CD8-positive, alpha-beta T cell (primary cell): ENCODE measurements at regions of chr5 and their contacts with region 1.

Region 1: DNA sequence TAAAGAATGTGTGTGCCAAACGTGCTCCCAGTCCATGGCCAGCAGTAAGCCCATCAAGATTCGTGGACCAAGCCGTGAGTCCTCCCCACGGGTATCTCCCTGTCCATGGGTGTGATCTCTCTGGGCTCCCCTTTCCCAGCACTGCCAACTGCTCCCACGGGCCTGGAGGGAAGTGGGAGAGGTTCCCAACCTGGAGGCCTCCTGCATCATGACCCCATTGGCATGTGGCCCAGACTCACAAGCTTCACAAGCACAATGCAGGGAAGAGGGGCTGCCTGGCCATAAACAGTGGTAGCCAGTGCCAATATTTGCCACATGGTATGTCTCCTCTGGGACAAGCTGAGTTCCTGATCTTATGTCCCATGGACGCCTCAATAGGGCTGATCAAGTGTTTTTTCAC is 59.1 kb downstream of the ABLIM3 start:
- DNase-seq: no peak
- ATAC-seq: no peak
- H3K4me3 ChIP-seq: no peak overlapping the region
- H3K4me3 Mint-ChIP-seq: no peak overlapping the region
- H3K27ac ChIP-seq: no peak overlapping the region
- H3K27ac Mint-ChIP-seq: no peak overlapping the region
- H3K4me1 ChIP-seq: no peaks in the 10 kb centered on the region
- H3K4me1 Mint-ChIP-seq: no peaks in the 10 kb centered on the region
- H3K27me3 ChIP-seq: peaks cover 0 to 5% of the 10 kb centered on the region in 2 experiments
- H3K27me3 Mint-ChIP-seq: no peaks in the 10 kb centered on the region
- CTCF ChIP-seq: no peak

Region 2: DNA sequence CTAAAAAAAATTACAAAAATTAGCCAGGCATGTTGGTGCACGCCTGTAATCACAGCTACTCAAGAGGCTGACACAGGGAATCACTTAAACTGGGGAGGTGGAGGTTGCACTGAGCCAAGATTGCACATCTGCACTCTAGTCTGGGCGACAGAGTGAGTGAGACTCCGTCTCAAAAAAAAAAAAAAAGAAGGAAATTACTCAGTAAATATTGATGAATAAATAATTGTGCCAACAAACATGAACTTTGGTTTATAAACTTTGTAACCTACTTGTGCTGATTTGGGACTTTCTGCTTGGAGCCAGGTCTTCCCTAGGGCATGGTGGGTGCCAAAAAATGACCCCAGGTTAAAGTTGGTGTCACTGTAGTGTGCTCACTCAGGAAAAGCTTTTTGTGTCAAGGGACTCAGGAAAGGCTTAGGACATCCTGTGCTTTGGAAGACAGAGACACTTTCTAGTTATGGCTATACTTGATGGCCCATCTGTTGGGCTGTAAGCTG is 40.0 kb before region 1 on chr5:
- CTCF ChIA-PET with region 1: interaction called, 3 read pairs
- POLR2A ChIA-PET with region 1: no interaction called
- intact Hi-C with region 1: loop called in 1 of 2 experiments (anchors 1 kb)
- DNase-seq: no peak
- ATAC-seq: no peak
- H3K4me3 ChIP-seq: no peak overlapping the region
- H3K4me3 Mint-ChIP-seq: no peak overlapping the region
- H3K27ac ChIP-seq: no peak overlapping the region
- H3K27ac Mint-ChIP-seq: no peak overlapping the region
- H3K4me1 ChIP-seq: no peaks in the 10 kb centered on the region
- H3K4me1 Mint-ChIP-seq: no peaks in the 10 kb centered on the region
- H3K27me3 ChIP-seq: no peaks in the 10 kb centered on the region
- H3K27me3 Mint-ChIP-seq: peaks cover 6% of the 10 kb centered on the region
- CTCF ChIP-seq: no peak

Region 3: DNA sequence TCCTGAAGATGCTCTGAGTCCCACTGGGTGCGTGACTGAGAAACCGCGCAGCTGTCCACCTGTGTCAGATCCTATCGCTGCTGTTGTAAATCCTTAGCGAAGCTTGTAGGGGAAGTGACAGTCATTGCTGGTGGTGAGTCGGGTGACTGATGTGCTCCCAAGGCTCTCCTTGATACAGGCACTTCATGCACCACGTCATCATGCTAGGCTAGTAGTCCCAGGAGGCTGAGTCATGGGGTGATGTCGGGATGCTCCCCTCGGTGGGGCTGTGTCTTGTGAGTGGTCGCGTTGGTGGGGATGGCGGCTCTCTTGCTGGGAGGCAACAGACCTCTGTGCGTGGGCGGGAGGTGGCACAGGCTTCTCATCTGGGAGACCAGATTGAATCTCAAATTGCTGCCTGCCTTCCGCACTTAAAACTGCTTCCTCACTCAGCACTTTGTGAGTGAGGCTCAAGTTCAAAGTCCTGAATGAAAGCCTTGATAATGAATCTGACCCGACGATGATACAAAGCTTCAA is 266.2 kb after region 1 on chr5:
- CTCF ChIA-PET with region 1: no interaction called
- POLR2A ChIA-PET with region 1: no interaction called
- intact Hi-C with region 1: no loop called
- DNase-seq: no peak
- ATAC-seq: no peak
- H3K4me3 ChIP-seq: no peak overlapping the region
- H3K4me3 Mint-ChIP-seq: no peak overlapping the region
- H3K27ac ChIP-seq: no peak overlapping the region
- H3K27ac Mint-ChIP-seq: no peak overlapping the region
- H3K4me1 ChIP-seq: no peaks in the 10 kb centered on the region
- H3K4me1 Mint-ChIP-seq: no peaks in the 10 kb centered on the region
- H3K27me3 ChIP-seq: peaks cover 0 to 9% of the 10 kb centered on the region in 2 experiments
- H3K27me3 Mint-ChIP-seq: peaks cover 13% of the 10 kb centered on the region
- CTCF ChIP-seq: no peak